WTC11 (cell line): ENCODE measurements at regions of chr10 and their contacts with region 1.

Region 1: DNA sequence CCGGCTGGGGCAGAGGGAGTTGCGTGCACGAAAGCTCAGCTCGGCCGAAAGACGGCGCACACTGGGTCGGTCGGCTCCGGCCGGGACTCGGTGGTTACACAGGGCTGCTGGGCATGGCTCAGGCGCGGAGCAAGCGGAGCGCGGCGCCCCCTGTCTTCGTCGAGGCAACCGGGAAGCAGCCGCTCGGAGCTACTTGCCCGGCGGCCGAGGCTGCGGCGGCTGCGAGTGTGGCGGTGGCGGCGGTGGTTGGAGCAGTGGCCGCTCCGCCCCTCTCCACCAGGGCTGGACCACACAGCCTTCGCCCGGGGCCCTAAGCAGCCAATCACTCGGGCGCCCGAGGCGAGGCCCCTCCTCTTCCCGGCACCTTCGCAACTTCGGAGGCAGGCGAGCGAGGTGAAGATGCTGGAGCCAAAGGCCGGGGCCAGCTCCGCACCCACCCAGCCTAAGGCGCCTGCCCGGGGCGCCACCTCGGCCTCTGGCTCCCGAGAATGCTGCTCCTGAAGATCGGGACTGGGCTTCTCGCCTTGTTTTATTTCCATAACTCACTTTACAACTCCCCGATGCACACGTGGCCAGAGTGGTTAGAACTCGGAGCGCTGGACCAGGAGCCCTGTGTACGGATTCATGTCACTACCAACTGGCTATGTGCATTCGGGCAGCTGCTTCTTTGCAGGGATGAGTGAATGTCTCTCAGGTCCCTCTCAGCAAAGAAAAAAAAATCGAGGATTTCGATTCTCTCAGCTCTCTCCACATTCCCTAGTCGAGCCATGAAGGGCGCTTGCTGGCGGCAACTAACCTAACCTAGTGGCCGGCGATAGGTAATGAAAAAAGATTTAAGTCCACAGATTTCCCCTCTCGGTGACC is at the start of gene TLL2:
- DNase-seq: peak; percentile 95
- ATAC-seq: peak; percentile 88
- H3K4me3 Mint-ChIP-seq: peak within 1 kb of the TSS; percentile 77
- H3K27ac Mint-ChIP-seq: no peak within 1 kb of the TSS
- H3K4me1 Mint-ChIP-seq: peaks cover 43% of the 10 kb centered on the region
- H3K27me3 Mint-ChIP-seq: peaks cover 39% of the 10 kb centered on the region
- CTCF ChIP-seq: no peak
- total RNA-seq, gene TLL2: 9.1 to 9.2 TPM (median 9.1 TPM) in 3 replicates

Region 2: GRCh38 chr10:96395931-96396877 is 117.7 kb before region 1 on chr10:
- CTCF ChIA-PET with region 1: interaction called, 169 read pairs
- POLR2A ChIA-PET with region 1: no interaction called
- DNase-seq: peak; percentile 77
- ATAC-seq: peak; percentile 87
- H3K4me3 Mint-ChIP-seq: peak overlapping the region; percentile 62
- H3K27ac Mint-ChIP-seq: no peak overlapping the region
- H3K4me1 Mint-ChIP-seq: peaks cover 24% of the 10 kb centered on the region
- H3K27me3 Mint-ChIP-seq: no peaks in the 10 kb centered on the region
- CTCF ChIP-seq: peak; percentile 82

Region 3: DNA sequence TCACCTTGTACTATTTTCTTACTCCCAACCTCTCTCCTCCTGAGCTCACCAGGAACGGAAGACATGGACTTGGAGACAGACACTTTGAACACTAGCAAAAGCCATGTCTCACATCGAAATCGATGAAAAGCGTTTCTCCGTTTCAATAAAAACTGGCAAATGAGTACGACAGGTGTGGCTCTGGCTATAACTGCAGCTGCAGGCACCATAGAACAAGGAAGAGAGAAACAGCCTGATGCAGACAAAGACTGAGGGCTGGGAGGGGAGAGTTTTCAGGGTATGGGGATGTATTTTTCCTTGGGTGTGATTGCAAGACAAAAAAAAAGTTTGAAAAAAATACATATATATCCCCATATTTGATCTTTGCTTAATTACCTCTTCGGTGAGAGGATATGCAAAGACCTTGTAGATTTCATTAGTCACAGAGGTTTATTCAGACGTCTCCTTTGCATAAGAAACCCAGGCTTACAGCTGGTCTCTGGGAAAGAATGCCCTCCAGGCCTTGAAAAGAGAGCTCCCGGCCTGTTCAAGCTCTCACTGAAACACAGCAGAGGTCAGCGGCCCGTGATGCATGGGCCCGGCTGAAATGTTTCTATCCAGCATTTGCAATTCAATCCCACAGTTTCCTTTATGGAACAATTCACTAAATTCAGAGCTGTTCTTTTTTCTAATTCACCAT is 63.3 kb before region 1 on chr10:
- CTCF ChIA-PET with region 1: interaction called, 25 read pairs
- POLR2A ChIA-PET with region 1: no interaction called
- DNase-seq: peak; percentile 69
- ATAC-seq: peak; percentile 91
- H3K4me3 Mint-ChIP-seq: peak overlapping the region; percentile 57
- H3K27ac Mint-ChIP-seq: peak overlapping the region; percentile 100
- H3K4me1 Mint-ChIP-seq: peaks cover 80% of the 10 kb centered on the region
- H3K27me3 Mint-ChIP-seq: no peaks in the 10 kb centered on the region
- CTCF ChIP-seq: no peak

Region 4: DNA sequence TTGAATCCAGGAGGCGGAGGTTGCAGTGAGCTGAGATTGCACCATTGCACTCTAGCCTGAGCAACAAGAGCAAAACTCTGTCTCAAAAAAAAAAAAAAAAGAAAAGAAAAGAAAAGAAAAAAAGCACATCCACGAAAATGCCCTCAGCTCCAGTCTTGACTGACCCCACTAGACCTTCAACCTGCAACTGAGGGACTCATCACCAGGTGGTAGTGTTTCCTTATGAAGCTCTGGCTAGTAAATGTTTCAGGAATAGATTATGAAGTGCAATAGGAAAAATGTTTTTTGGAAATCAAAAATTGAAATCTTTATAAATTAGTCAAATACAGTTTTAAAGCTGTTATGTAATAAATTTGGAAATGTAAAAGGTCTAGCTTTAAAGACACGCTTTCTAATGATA is 22.6 kb before region 1 on chr10:
- CTCF ChIA-PET with region 1: interaction called, 88 read pairs
- POLR2A ChIA-PET with region 1: interaction called, 4 read pairs
- DNase-seq: no peak
- ATAC-seq: peak; percentile 53; the same call in 1 of the 2 replicates
- H3K4me3 Mint-ChIP-seq: no peak overlapping the region
- H3K27ac Mint-ChIP-seq: no peak overlapping the region
- H3K4me1 Mint-ChIP-seq: peaks cover 34% of the 10 kb centered on the region
- H3K27me3 Mint-ChIP-seq: no peaks in the 10 kb centered on the region; the same call in 1 of the 2 replicates
- CTCF ChIP-seq: no peak

Region 5: DNA sequence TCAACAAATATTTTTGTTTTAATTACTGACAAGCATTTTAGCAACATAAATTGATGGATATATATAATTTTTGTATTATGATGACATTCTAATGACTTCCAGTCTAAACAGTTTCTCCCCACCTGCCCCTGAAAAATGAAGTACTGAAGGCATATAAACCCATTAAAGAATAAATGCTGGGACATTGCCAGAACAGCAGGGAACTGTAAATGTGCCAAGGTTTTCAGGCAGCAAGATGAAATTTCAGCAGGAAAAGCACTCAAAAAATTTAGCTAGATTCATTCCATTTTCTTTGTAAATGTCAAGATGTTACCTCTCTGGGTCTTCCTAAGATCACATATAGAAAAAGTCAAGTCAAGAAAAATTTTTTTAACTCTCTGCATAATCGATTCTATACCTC is 10.8 kb after region 1 on chr10:
- CTCF ChIA-PET with region 1: interaction called, 18 read pairs
- POLR2A ChIA-PET with region 1: no interaction called
- DNase-seq: no peak
- ATAC-seq: no peak
- H3K4me3 Mint-ChIP-seq: no peak overlapping the region
- H3K27ac Mint-ChIP-seq: peak overlapping the region; percentile 19; the same call in 1 of the 2 replicates
- H3K4me1 Mint-ChIP-seq: no peaks in the 10 kb centered on the region
- H3K27me3 Mint-ChIP-seq: no peaks in the 10 kb centered on the region
- CTCF ChIP-seq: no peak

Region 6: GRCh38 chr10:96570983-96571964 is 57.3 kb after region 1 on chr10:
- CTCF ChIA-PET with region 1: interaction called, 13 read pairs
- POLR2A ChIA-PET with region 1: no interaction called
- DNase-seq: no peak
- ATAC-seq: peak; percentile 91
- H3K4me3 Mint-ChIP-seq: peak overlapping the region; percentile 32
- H3K27ac Mint-ChIP-seq: peak overlapping the region; percentile 89
- H3K4me1 Mint-ChIP-seq: peaks cover 57% of the 10 kb centered on the region
- H3K27me3 Mint-ChIP-seq: no peaks in the 10 kb centered on the region
- CTCF ChIP-seq: no peak

Region 7: DNA sequence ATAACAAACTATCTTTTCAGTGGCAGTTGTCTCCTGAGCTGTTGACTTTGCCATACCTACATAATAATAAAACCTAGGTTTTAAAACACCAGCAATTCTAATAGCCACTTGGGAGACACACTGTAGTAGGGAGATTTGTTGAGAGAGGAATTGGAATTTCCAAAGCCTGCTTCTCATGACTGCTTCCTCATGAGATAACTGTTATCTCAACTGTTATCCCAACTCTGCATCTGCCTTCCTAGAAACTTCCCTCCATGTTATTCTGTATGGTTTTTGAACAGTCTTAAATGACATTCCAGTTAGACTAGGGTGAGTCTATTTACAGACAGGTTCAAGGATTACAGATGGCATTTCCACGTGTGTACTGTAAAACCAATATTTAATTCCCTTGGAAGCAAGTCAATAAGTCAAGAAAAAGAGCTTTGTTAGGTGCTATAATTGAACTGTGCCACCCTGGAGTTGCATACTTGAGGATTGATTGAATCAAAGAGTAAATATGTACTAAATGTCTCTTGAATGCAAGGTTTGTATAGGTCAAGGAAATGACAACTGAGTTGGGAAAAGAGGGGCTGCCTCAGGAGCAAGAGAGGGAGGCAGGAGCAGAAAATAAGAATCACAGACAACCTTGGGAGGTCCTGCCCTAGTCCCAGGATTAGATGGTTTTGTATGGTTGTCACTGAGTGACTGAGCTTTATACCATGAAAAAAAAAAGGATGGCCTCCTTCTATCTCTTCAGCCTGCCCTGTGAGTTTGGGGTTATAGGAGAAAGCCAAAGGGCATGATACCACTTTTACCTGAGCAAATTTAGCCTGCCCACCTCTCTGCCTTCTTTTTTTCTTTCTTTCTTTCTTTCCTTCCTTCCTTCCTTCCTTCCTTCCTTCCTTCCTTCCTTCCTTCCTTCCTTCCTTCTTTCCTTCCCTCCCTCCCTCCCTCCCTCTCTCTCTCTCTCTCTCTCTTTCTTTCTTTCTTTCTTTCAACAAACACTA is 82.8 kb after region 1 on chr10:
- CTCF ChIA-PET with region 1: no interaction called
- POLR2A ChIA-PET with region 1: no interaction called
- DNase-seq: no peak
- ATAC-seq: no peak
- H3K4me3 Mint-ChIP-seq: no peak overlapping the region
- H3K27ac Mint-ChIP-seq: no peak overlapping the region
- H3K4me1 Mint-ChIP-seq: peaks cover 6% of the 10 kb centered on the region
- H3K27me3 Mint-ChIP-seq: no peaks in the 10 kb centered on the region
- CTCF ChIP-seq: no peak

Region 8: DNA sequence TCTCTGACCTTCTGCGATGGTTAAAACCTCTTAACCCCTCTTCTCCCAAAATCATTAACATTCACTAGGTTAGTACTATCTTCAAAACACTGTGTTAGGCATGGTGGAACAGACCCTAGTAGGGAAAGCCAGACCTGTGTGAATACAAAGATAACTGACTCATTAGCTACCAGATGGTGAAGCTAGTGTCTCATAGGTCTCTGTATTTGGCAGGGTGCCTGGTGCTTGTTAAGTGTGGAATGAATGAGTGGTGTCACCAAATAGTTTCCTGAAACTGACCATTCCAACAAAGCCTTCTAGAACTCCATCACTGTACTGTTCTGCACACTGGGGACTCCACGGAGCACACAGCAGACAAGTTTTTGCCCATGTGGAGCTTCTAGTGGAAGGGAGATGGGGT is 100.6 kb after region 1 on chr10:
- CTCF ChIA-PET with region 1: no interaction called
- POLR2A ChIA-PET with region 1: no interaction called
- DNase-seq: no peak
- ATAC-seq: no peak
- H3K4me3 Mint-ChIP-seq: no peak overlapping the region
- H3K27ac Mint-ChIP-seq: no peak overlapping the region
- H3K4me1 Mint-ChIP-seq: peaks cover 7% of the 10 kb centered on the region
- H3K27me3 Mint-ChIP-seq: no peaks in the 10 kb centered on the region; the same call in 1 of the 2 replicates
- CTCF ChIP-seq: no peak